ENCODE measurements at regions of chr4 and their contacts with region 1.

Region 1: GRCh38 chr4:184487513-184487912 is 13.2 kb upstream of the IRF2 start:
- DNase-seq: no peak
- ATAC-seq: peak; percentile 49

Region 2: DNA sequence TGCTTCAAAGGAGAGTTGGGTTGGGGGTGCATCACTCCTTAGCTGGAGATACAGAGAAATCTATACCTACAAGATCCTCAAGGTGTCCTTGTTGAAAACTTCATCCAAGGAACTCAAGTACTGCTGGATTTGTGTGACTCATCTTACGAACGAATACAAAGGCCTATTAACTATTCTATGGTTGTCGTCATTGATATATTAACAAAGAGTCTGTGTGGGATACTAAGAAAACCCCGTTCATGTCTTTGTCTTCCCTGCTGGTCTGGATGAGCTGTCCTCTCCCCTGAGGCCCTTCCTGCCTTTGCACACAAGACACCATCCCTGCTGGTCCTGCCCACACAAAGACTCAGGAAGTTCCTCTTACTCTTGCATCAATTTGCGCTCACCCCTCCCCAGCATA is 41.8 kb after region 1 on chr4:
- intact Hi-C with region 1: loop called in 1 of 2 experiments (anchors 5 kb)
- DNase-seq: no peak
- ATAC-seq: no peak

Region 3: DNA sequence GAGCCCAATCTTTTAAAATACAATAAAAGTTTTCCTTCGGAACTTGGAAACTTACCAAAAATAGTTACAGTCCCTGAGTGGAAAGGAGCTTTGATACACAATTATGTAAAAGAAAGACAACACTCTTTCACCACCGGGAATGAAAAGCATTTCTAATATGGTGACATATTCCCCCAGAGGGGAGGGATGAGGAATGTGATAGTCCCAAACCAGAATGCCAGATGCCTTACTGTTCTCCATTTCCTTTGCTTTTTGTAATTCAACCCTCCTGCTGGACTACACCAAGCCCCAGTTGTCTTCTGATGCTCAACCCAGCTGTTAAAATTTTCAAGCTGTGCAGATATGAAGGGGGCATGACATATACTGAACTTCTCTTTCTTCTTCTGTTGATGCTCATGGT is 166.1 kb after region 1 on chr4:
- intact Hi-C with region 1: no loop called
- DNase-seq: no peak
- ATAC-seq: no peak

Region 4: GRCh38 chr4:184733654-184734524 is 246.4 kb after region 1 on chr4 and contains the start of gene CENPU:
- intact Hi-C with region 1: no loop called
- DNase-seq: peak; percentile 96 to 97
- ATAC-seq: peak; percentile 95
- total RNA-seq, gene CENPU: 5.8 to 11.8 TPM

Region 5: GRCh38 chr4:185005216-185005819 is 517.8 kb after region 1 on chr4:
- intact Hi-C with region 1: no loop called
- DNase-seq: peak; percentile 71 to 90
- ATAC-seq: peak; percentile 95

Measured in left colon (tissue), 2 donors.